Posterior vena cava (tissue), 2 donors: ENCODE measurements at regions of chr1 and their contacts with region 1.

Region 1: GRCh38 chr1:229558571-229559335 is at the start of gene ABCB10:
- DNase-seq: peak; percentile 98
- total RNA-seq, gene ABCB10: 14.1 to 21.9 TPM

Region 2: GRCh38 chr1:229596925-229597699 is 38.4 kb after region 1 on chr1:
- intact Hi-C with region 1: loop called in 1 of 2 experiments (anchors 5 kb)
- DNase-seq: peak; percentile 88

Region 3: GRCh38 chr1:229625915-229626831 is 67.4 kb after region 1 on chr1 and contains the starts of genes TAF5L and URB2:
- intact Hi-C with region 1: loop called in 1 of 2 experiments (anchors 5 kb)
- DNase-seq: peak; percentile 95
- total RNA-seq, gene TAF5L: 25.7 to 27.0 TPM
- total RNA-seq, gene URB2: 7.5 to 8.3 TPM